ENCODE measurements at regions of chr1 and their contacts with region 1.

Region 1: GRCh38 chr1:84143796-84144565 is at the start of gene PRKACB:
- DNase-seq: peak; percentile 38 to 68 (median 60)
- H3K4me3 ChIP-seq: peak within 1 kb of the TSS; percentile 37 to 70 (median 41)
- H3K4me3 Mint-ChIP-seq: peak within 1 kb of the TSS; percentile 53 to 86
- H3K27ac ChIP-seq: peak within 1 kb of the TSS in 1 of 2 donors; percentile 83
- H3K27ac Mint-ChIP-seq: peak within 1 kb of the TSS; percentile 53 to 90 (median 84)
- H3K4me1 ChIP-seq: peaks cover 17 to 65% of the 10 kb centered on the region in 2 donors
- H3K4me1 Mint-ChIP-seq: peaks cover 42% of the 10 kb centered on the region
- H3K27me3 ChIP-seq: no peaks in the 10 kb centered on the region
- H3K27me3 Mint-ChIP-seq: no peaks in the 10 kb centered on the region
- CTCF ChIP-seq: no peak
- polyA plus RNA-seq, gene PRKACB: 2.5 to 14.5 (median 13.8) TPM

Region 2: GRCh38 chr1:84103197-84103992 is 40.6 kb before region 1 on chr1:
- intact Hi-C with region 1: no loop called
- DNase-seq: peak in 2 of 3 donors; percentile 8 to 60
- H3K4me3 ChIP-seq: no peak overlapping the region
- H3K4me3 Mint-ChIP-seq: no peak overlapping the region
- H3K27ac ChIP-seq: no peak overlapping the region
- H3K27ac Mint-ChIP-seq: peak overlapping the region in 1 of 7 donors; percentile 47
- H3K4me1 ChIP-seq: no peaks in the 10 kb centered on the region
- H3K4me1 Mint-ChIP-seq: peaks cover 5% of the 10 kb centered on the region
- H3K27me3 ChIP-seq: no peaks in the 10 kb centered on the region
- H3K27me3 Mint-ChIP-seq: peaks cover 0 to 2% (median 0%) of the 10 kb centered on the region in 3 donors
- CTCF ChIP-seq: no peak

Region 3: DNA sequence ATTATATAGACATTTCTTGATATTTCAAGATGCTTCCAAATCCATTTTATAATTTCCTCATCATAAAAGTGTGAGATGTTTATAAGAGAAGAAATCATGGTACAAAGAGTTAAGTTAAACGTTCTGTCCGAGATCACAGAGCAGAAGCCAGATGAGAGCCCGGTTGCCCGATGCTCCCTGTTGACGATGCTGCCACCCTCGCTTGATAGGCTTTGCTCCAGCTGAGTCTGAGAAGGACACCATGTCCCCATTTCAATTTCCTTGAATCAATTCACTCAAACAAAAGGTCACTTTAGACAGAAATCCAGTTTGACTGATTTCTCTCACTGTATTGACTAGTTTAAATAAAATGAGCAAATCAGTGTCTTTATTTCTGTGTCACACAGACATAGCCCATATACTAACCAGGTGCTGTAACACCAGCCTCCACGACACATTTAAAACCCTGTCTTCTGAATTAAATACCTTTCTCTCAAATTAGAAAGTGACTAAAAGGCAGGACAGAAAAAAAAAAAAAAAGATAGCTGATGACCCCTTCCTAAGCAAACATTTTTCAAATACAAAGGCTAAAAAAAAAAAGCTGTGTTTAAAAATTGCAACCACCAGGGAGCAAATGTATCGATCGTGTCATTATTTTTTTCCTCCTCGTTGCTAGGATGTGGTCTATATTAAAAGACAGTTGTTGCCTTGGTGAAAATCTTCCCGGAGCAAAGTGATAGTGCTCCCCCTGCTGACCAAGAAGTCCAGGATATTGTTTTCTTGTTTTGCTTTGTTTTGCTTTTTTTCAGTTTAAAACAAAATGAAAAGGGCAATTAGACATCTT is 289.5 kb after region 1 on chr1:
- intact Hi-C with region 1: loop called in 1 of 2 experiments (anchors 5 kb)
- DNase-seq: peak; percentile 51 to 63 (median 60)
- H3K4me3 ChIP-seq: peak overlapping the region; percentile 21 to 64 (median 58)
- H3K4me3 Mint-ChIP-seq: peak overlapping the region; percentile 71 to 82
- H3K27ac ChIP-seq: peak overlapping the region in 1 of 2 donors; percentile 88
- H3K27ac Mint-ChIP-seq: peak overlapping the region in 4 of 7 donors; percentile 44 to 76 (median 68)
- H3K4me1 ChIP-seq: peaks cover 51 to 61% of the 10 kb centered on the region in 2 donors
- H3K4me1 Mint-ChIP-seq: peaks cover 19% of the 10 kb centered on the region
- H3K27me3 ChIP-seq: no peaks in the 10 kb centered on the region
- H3K27me3 Mint-ChIP-seq: no peaks in the 10 kb centered on the region
- CTCF ChIP-seq: peak; percentile 87

Region 4: DNA sequence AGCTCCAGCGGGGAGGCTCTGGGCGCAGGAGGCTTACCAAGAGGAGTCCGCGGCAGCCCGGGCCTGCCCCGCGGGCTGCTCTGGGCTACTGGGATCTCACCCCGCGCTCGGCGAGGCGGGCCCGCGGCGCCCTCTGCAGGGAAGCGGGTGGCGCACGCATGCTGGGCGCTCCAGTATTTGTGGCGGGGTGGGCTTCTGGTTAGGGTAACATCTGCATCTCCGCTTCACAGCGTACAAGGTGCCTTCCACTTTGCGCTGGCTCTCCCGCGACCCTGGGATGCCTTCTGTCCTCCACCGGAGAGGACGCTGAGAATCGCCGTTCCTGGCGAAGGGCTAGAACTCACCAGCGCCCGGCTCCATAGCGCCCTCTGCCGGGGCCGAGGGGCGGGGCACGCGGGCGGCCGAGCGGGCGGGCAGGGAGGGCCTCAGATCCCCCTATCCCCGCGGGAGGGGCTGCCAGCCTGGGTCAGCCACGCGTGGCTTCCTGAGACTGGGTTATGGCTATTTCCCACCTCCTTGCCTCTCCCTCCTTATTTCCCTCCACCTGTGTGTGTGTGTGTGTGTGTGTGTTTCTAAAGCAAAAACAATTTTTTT is 476.8 kb after region 1 on chr1:
- intact Hi-C with region 1: loop called in 1 of 2 experiments (anchors 5 kb)
- DNase-seq: peak; percentile 64 to 72 (median 65)
- H3K4me3 ChIP-seq: peak overlapping the region; percentile 59 to 85 (median 63)
- H3K4me3 Mint-ChIP-seq: peak overlapping the region; percentile 93 to 97
- H3K27ac ChIP-seq: peak overlapping the region in 1 of 2 donors; percentile 76
- H3K27ac Mint-ChIP-seq: peak overlapping the region; percentile 62 to 98 (median 93)
- H3K4me1 ChIP-seq: peaks cover 5 to 19% of the 10 kb centered on the region in 2 donors
- H3K4me1 Mint-ChIP-seq: peaks cover 16% of the 10 kb centered on the region
- H3K27me3 ChIP-seq: no peaks in the 10 kb centered on the region
- H3K27me3 Mint-ChIP-seq: peaks cover 0 to 8% (median 2%) of the 10 kb centered on the region in 3 donors
- CTCF ChIP-seq: peak; percentile 100

Region 5: GRCh38 chr1:84690397-84691121 is 546.6 kb after region 1 on chr1 and contains the start of gene SSX2IP:
- intact Hi-C with region 1: loop called in 1 of 2 experiments (anchors 10 kb)
- DNase-seq: peak; percentile 94 to 96 (median 94)
- H3K4me3 ChIP-seq: peak within 1 kb of the TSS; percentile 59 to 91 (median 81)
- H3K4me3 Mint-ChIP-seq: peak within 1 kb of the TSS; percentile 89 to 95
- H3K27ac ChIP-seq: peak within 1 kb of the TSS; percentile 53 to 70
- H3K27ac Mint-ChIP-seq: peak within 1 kb of the TSS; percentile 76 to 94 (median 88)
- H3K4me1 ChIP-seq: peaks cover 29 to 40% of the 10 kb centered on the region in 2 donors
- H3K4me1 Mint-ChIP-seq: peaks cover 40% of the 10 kb centered on the region
- H3K27me3 ChIP-seq: no peaks in the 10 kb centered on the region
- H3K27me3 Mint-ChIP-seq: peaks cover 0 to 3% (median 0%) of the 10 kb centered on the region in 3 donors
- CTCF ChIP-seq: no peak
- polyA plus RNA-seq, gene SSX2IP: 0.85 to 2.8 (median 2.2) TPM

Region 6: DNA sequence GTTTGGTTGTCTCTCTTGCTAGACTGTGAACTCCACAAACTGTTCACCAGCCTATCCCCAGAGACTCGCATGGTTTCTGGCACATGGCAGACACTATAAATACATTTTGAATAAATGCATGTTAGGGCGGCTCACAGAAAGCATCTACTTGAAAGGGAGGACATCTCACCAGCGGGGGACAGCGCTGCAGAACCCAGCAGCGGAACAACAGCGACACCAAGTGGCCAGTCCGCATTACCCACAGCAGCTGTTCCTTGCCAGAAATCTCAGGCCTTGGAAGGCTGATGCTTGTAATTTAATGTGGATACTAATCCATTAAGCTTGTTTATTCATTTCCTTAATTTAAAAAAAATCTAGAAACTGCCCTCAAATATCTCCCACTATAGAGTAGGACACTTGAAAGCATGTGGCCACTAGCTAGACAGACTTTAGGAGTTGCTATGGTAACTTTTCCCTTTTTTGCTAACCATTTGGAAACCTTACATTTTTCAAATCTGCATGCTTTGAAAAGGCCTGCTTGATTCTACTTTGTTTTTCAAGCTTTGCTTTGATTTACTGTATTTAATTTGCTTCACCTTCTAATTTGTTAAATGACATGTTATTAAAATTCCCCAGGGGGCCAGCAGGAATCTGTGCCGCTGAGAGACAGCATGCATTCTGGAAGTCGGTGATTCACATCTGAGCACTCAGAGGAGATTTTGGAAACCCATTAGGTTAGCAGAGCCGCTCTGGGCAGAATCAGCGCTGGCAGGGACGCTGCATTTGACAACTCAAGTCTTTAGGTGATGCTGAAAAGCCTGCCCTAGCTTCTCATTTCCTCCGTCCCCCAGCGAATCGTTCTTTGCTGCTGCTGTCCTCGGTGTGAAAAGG is 609.8 kb after region 1 on chr1:
- intact Hi-C with region 1: loop called in 1 of 2 experiments (anchors 5 kb)
- DNase-seq: peak; percentile 25 to 57 (median 46)
- H3K4me3 ChIP-seq: no peak overlapping the region
- H3K4me3 Mint-ChIP-seq: no peak overlapping the region
- H3K27ac ChIP-seq: no peak overlapping the region
- H3K27ac Mint-ChIP-seq: no peak overlapping the region
- H3K4me1 ChIP-seq: peaks cover 2% of the 10 kb centered on the region in 2 donors
- H3K4me1 Mint-ChIP-seq: peaks cover 5% of the 10 kb centered on the region
- H3K27me3 ChIP-seq: no peaks in the 10 kb centered on the region
- H3K27me3 Mint-ChIP-seq: peaks cover 3 to 10% (median 6%) of the 10 kb centered on the region in 3 donors
- CTCF ChIP-seq: peak; percentile 95

Region 7: DNA sequence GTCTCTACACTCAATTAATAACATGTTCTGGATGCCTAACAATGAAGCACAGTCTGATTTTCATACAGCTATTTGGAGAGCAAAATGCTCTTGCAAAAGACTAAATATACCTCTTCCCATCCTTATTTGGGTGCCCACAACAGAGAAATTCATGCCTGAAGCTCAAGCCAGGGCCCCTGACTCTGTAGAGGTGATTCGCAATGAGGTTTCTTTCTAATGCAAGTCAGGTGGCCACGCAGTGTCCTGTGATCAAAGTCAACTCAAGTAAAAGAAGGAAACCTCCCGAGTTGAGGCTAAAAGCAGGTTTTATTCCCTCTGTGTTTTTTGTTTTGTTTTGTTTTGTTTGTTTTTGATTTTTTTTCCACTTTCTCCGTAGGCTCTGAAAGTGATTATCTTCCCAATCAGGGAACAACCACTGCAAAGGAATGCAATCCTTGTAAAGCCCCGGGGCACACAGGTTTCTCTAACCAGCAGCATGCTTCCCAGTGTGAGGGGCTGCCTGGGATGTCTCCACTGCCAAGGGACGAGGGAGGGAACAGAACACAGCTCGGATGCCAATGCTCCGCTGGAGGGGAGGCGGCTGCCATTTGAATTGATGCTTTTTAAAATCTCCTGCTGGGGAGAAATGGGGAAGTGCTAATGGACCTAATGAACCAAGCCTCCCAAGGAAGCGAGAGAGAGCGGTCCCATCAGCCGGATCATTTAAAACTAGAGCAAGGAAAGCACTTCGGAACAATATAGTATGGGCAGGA is 620.1 kb after region 1 on chr1:
- intact Hi-C with region 1: loop called in 1 of 2 experiments (anchors 10 kb)
- DNase-seq: no peak
- H3K4me3 ChIP-seq: no peak overlapping the region
- H3K4me3 Mint-ChIP-seq: no peak overlapping the region
- H3K27ac ChIP-seq: no peak overlapping the region
- H3K27ac Mint-ChIP-seq: no peak overlapping the region
- H3K4me1 ChIP-seq: peaks cover 4 to 6% of the 10 kb centered on the region in 2 donors
- H3K4me1 Mint-ChIP-seq: peaks cover 10% of the 10 kb centered on the region
- H3K27me3 ChIP-seq: no peaks in the 10 kb centered on the region
- H3K27me3 Mint-ChIP-seq: peaks cover under 1 to 4% (median 2%) of the 10 kb centered on the region in 3 donors
- CTCF ChIP-seq: no peak

Measured in CD14-positive monocyte (primary cell).